GM18951 (cell line): ENCODE measurements at regions of chr20 and their contacts with region 1.

Region 1: DNA sequence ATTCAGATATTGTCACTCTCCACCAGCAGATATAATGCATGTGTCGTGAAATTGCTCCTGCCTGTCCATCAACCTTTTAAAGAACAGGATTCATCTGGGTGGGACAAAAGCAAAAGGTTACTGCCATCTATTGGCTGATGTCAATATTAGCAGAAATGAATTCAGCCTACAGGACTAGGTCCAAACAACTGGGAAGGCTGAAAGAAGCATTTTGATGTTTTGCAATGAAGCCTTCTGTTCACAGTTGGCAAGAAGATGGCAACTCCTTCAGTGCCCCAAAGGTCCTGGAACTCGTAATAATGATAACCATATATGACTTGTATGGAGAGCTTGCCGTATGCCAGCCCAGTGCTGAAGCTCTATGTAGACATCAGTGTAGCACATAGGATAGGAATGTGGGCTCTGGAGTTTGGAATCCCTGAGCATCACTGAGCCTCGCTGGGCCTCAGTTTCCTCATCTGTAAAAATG is 7.5 kb downstream of the BCAS1 start:
- POLR2A ChIP-seq: no peak

Region 2: DNA sequence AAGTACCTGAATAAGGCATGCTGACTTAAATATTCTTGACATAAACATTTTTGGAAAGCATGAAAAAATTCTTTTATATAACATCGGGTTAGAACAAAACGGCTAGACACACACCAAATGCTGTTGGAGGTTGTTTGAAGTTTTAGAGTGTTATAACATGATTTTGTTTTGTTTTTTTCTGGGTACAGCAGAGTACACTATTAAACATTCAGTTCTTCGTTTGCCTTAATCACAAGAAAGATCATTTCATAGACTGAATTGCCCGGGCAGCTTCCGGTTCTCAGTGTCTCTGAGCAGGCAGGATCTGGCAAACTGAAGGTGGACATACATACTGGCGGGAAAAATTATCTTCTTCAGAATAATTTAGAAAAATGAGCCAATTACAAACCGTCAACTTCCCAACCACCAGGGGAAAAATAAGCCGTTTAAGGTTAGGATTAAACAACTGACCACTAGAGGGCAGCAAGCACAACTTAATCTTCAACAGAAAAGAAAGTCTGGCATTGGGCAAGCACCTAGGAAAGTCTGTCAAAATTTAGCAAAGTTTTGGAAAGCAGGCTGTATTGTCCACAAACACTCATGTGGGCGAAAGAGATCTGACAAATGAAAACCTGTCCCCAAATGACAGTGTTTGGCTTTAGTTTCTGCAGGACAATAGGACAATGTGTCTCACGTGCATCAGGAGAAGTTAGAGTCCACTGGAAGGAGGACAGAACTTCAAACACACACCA is 484.2 kb before region 1 on chr20:
- in situ Hi-C with region 1: loop called (anchors 10 kb)
- POLR2A ChIP-seq: no peak

Region 3: DNA sequence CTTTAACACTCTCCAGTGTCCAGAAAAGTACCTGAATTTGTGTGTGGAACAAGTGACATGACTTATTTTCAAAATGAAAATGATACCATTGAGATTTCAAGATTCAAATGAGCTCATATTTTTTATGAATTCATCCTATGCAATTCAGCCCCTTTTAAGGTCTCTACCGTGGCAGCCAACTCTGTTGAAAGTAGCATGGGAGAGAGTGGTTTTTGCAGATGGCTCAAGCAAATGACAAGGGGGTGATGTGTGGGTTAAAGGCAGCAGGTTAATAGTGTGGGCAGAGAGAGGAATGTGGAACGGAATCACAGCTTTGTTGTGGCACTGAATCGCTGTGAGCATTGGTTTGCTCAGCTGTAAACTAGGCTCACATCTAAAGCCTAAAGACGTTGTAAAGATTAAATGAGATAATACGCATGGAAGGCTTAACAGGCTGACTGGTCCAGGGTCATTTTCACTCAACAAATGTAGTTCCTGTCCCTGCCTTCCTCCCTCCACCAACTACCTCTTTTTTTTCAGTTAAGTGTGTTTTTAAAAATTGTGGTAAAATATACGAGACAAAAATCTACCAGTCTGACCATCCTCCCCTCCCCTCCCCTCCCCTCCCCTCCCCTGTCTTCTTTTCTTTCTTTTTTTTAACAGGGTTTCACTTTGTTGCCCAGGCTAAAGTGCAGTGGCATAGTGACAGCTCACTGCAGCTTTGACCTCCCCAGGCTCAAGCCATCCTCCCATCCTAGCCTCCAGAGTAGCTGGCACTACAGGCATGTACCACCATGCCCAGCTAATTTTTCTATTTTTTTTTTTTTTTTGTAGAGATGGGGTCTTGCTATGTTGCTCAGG is 354.5 kb before region 1 on chr20:
- in situ Hi-C with region 1: loop called (anchors 25 kb)
- POLR2A ChIP-seq: no peak

Region 4: DNA sequence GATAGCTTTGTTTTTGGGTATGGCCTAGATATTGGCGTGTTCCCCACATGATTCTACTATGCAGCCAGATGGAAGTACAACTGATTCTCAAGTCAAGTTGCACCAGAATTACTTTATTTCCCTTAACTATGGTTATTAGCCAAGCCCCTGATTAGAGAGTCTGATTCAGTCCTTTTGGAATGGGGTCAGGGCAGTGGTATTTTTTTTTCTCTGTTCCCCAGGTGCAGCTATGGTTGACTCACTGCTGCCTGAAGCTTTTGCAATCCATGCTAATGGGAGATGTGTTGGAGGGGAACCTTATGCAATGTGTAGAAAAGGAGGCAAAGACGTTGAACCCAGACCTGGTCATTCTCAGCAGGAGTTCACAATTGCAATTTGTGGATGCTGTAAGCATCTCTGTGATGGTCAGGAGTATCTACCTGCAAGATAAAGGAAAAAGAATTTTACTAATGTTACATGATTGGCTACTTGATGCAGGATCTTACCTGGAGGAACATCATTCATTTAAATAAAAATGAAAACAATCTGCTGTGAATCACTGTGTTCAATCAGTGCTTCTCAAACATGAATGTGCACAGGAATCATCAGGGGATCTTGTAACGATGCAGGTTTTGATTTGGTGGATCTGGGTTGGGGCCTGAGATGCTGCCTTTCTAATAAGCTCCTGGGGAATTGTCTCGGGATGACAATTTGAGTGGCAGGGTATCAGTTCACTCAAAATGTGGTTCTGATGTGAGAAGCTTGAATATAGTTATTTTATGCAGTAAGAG is 194.4 kb after region 1 on chr20:
- in situ Hi-C with region 1: no loop called
- POLR2A ChIP-seq: no peak

Region 5: GRCh38 chr20:55360895-55361294 is 1298.0 kb after region 1 on chr20:
- in situ Hi-C with region 1: no loop called
- POLR2A ChIP-seq: no peak